Activated CD8-positive, alpha-beta T cell treated with anti-CD3 and anti-CD28 coated beads for 36 hours (primary cell): ENCODE measurements at regions of chr14 and their contacts with region 1.

Region 1: DNA sequence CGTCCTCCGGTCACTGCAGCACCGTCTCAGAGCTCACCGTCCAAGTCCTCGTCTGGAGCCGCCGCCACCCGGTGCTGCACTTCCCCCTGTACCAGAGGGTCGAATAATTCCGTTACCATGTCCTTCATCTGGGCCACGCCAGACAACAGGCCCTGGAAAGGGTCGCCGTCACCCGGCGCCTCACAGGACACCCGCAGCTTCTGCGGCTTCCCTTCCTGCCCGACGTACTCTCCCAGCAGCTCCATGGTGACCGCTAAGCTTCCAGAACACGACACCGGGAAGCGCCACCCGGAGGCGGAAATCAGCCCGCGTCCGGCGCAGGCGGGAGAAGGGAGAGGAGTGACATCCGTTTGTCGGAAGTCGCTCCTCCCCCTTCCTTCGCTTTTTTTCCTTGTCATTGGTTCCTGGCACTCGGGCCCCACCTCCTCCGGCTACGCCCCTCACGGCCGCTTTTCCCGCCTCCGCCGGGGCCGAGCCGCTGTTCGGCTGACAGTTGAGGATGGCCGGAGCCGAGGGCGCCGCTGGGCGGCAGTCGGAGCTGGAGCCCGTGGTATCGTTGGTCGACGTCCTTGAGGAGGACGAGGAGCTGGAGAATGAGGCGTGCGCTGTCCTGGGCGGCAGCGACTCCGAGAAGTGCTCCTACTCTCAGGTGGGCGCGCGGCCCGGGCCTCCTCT is at the starts of genes GON7 and UBR7:
- DNase-seq: peak; percentile 93
- ATAC-seq: peak; percentile 93
- H3K4me3 Mint-ChIP-seq: peak within 1 kb of the TSS; percentile 70
- H3K27ac Mint-ChIP-seq: peak within 1 kb of the TSS; percentile 95
- H3K4me1 Mint-ChIP-seq: peaks cover 36% of the 10 kb centered on the region
- H3K27me3 Mint-ChIP-seq: no peaks in the 10 kb centered on the region
- CTCF ChIP-seq: no peak
- total RNA-seq, gene GON7: 15.6 to 16.8 TPM
- total RNA-seq, gene UBR7: 38.5 to 39.7 TPM

Region 2: DNA sequence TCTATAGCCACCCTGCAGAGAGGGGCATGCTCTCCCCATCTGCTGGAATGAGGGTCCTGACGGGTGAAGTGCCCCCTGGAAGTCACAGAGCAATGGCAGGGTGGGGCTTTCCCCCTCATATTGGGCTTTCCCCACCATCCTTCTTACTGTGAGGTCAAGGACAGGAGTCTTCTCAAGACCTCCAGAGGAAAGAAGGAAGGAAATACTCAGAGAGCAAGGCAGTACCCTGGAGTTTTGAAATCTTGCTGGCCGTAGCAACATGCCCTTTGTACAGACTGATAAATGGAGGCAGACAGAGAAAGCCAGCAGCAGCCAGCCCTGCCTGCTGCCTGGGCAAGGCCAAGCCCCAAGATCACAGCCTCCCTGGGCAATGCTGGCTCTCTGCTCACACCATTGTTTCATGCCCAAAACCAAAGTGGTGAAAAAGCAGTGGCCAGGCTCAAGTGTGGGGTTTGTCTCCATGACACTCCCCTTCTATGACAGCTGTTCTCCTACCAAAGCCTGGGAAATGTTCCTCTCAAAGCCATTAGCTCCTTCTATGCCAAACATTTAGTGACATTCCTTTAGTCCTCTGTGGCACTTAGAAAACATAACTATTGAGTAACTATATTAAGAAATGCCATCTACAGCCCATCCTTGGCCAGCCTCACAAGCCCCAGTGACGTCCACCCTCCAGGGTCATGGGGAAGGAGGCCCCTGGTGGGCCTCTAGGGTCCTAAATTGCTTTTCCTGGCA is 78.0 kb before region 1 on chr14:
- CTCF ChIA-PET with region 1: no interaction called
- POLR2A ChIA-PET with region 1: no interaction called
- intact Hi-C with region 1: no loop called
- DNase-seq: no peak
- ATAC-seq: no peak
- H3K4me3 Mint-ChIP-seq: no peak overlapping the region
- H3K27ac Mint-ChIP-seq: no peak overlapping the region
- H3K4me1 Mint-ChIP-seq: no peaks in the 10 kb centered on the region
- H3K27me3 Mint-ChIP-seq: no peaks in the 10 kb centered on the region
- CTCF ChIP-seq: no peak

Region 3: DNA sequence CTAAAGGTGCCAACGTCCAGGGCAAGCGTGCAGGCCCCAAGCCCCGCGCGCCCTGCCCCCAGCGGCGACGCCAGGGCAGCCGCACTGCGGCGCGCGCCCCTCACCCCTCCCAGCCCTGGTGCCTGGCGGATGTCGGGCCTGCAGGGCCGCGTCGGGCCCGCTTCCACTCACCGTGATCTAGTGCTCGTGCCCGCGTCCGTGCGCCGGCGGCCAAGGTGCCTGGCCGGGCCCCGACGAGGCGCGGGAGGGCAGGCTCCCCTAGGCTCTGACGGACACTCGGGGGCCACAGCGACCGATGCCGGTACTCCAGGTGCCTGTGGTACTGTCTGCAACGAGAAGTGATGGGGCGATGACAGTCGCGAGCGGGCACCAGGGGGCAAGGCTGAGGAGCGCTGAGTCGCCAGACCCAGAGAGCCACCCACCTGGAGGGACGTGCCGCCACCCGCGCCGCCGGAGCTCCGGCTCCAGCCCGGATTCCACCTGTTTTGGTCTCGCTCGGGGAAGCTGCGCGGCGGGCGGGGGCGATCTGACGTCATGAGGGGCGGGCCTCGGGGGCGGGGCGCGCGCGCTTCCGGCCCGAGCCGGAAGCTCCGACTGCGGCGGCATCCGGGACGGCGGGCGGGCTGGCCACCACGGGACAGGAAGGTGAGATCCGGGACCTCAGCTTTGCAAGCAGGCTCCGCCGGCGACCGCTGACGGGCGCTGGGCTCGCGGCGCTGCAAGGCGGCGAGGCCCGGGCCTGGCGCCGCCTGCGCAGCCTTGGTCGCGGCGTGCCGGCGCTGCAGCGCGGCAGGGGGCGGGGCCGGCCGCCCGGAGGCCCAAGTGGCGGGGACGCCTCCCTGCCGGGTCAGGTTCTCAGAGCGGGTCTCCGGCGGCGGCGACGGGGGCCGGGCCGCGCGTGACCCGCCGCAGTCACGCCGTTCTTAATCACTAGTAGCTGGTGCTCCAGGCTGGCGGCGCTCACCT is 22.3 kb before region 1 on chr14 and contains the starts of genes LYSET and MOAP1:
- CTCF ChIA-PET with region 1: interaction called, 26 read pairs
- POLR2A ChIA-PET with region 1: interaction called, 50 read pairs
- intact Hi-C with region 1: no loop called
- DNase-seq: peak; percentile 92
- ATAC-seq: peak; percentile 89
- H3K4me3 Mint-ChIP-seq: peak within 1 kb of the TSS; percentile 97
- H3K27ac Mint-ChIP-seq: peak within 1 kb of the TSS; percentile 91
- H3K4me1 Mint-ChIP-seq: peaks cover 43% of the 10 kb centered on the region
- H3K27me3 Mint-ChIP-seq: no peaks in the 10 kb centered on the region
- CTCF ChIP-seq: peak; percentile 11
- total RNA-seq, gene LYSET: 13.6 to 15.5 TPM
- total RNA-seq, gene MOAP1: 19.1 to 19.6 TPM

Region 4: GRCh38 chr14:93245764-93246420 is 39.0 kb after region 1 on chr14:
- CTCF ChIA-PET with region 1: no interaction called
- POLR2A ChIA-PET with region 1: no interaction called
- intact Hi-C with region 1: no loop called
- DNase-seq: no peak
- ATAC-seq: no peak
- H3K4me3 Mint-ChIP-seq: no peak overlapping the region
- H3K27ac Mint-ChIP-seq: no peak overlapping the region
- H3K4me1 Mint-ChIP-seq: no peaks in the 10 kb centered on the region
- H3K27me3 Mint-ChIP-seq: no peaks in the 10 kb centered on the region
- CTCF ChIP-seq: no peak

Region 5: DNA sequence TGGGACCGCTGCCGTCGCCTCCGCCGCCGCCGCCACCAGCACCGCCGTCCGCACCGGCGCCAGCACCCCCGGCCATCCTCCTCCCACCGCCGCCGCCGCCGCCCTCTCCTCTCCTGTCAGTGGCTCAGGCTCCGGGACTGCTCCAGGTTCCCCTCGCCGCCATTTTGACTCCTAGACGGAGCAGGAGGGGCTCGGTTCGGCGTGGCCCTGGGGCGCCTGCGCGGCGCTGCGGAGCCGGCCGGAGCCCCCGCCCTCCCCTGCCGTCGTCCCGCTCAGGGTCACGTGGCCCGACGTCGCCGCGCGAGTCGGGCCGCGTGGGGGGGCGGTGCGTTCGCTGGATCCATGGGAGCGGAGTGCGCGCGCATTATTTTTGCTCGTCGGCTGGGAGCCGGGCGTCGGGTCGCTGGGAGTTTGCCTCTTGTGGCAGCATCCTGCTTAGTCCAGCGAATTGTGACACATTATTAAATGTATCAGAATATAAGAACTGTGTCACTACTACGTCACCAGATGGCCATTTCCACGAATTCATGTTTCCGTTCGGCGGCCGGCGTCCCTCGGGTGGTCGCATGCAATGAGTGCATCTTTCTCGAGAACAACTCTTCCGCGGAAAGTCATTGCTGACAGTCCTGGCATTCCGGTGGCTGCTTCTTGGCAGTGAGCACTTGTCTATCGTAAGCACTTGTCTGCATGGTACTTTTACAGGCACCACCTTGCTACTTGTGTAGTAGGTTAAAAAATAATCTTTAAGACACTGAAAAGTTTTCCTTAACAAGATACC is 126.1 kb after region 1 on chr14 and contains the start of gene BTBD7:
- CTCF ChIA-PET with region 1: interaction called, 4 read pairs
- POLR2A ChIA-PET with region 1: interaction called, 6 read pairs
- intact Hi-C with region 1: loop called (anchors 5 kb)
- DNase-seq: peak; percentile 97
- ATAC-seq: peak; percentile 92
- H3K4me3 Mint-ChIP-seq: peak within 1 kb of the TSS; percentile 88
- H3K27ac Mint-ChIP-seq: peak within 1 kb of the TSS; percentile 95
- H3K4me1 Mint-ChIP-seq: peaks cover 54% of the 10 kb centered on the region
- H3K27me3 Mint-ChIP-seq: no peaks in the 10 kb centered on the region
- CTCF ChIP-seq: no peak
- total RNA-seq, gene BTBD7: 8.7 to 12.6 TPM